Lower leg skin (tissue), 4 donors: ENCODE measurements at regions of chr18 and their contacts with region 1.

Region 1: GRCh38 chr18:2723207-2723606 is 67.7 kb downstream of the SMCHD1 start:
- DNase-seq: no peak
- H3K4me3 ChIP-seq: no peak overlapping the region
- CTCF ChIP-seq: no peak
- POLR2A ChIP-seq: no peak

Region 2: DNA sequence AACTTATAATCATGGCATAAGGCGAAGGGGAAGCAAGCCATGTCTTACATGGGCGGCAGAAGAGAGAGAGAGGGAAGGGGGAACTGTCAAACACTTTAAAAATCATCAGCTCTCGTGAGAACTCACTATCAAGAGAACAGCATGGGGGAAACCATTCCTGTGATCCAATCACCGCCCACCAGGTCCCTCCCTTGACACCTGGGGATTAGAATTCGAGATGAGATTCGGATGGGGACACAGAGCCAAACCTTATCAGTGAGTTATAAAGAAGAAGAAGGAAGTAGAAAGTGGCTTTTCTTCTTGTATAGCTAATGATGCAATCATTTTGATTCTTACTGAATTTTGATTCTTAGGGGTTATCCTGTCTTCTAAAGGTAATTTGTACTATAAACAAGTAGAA is 16.3 kb before region 1 on chr18:
- intact Hi-C with region 1: loop called (anchors 1 kb)
- DNase-seq: no peak
- H3K4me3 ChIP-seq: no peak overlapping the region
- CTCF ChIP-seq: no peak
- POLR2A ChIP-seq: no peak

Region 3: DNA sequence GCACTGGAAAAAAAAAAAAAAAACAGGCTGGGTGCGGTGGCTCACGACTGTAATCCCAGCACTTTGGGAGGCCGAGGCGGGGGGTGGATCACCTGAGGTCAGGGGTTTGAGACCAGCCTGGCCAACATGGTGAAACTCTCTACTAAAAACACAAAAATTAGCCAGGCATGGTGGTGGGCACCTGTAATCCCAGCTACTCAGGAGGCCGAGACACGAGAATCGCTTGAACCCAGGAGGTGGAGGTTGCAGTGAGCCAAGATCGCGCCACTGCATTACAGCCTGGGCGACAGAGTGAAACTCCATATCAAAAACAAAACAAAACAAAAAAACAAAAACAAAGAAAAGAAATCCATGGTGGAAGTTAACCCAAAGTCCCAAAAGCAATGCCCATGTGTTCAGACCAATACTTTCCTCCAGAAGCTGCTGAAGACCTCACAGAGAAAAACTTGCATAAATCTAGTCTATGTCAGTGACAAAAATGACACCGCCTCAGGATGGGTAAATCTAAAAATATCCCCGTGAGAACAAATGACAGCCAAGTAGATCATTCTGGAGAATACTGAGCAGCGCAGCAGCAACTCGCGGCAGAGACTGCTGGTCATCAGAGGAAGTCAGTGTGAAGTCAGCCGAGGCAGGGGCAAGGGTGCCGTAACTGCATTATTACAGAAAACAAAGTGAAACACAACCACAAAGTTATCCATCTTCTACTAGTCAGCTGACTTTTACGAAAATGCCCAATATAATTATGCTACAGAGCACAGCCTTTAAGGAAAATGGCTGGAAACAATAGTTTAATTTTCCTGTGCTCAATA is 248.7 kb after region 1 on chr18:
- intact Hi-C with region 1: no loop called
- DNase-seq: peak in 1 of 2 donors; percentile 46
- H3K4me3 ChIP-seq: no peak overlapping the region
- CTCF ChIP-seq: no peak
- POLR2A ChIP-seq: no peak